Activated naive CD4-positive, alpha-beta T cell treated with anti-CD3 and anti-CD28 coated beads for 36 hours (primary cell): ENCODE measurements at regions of chr21 and their contacts with region 1.

Region 1: DNA sequence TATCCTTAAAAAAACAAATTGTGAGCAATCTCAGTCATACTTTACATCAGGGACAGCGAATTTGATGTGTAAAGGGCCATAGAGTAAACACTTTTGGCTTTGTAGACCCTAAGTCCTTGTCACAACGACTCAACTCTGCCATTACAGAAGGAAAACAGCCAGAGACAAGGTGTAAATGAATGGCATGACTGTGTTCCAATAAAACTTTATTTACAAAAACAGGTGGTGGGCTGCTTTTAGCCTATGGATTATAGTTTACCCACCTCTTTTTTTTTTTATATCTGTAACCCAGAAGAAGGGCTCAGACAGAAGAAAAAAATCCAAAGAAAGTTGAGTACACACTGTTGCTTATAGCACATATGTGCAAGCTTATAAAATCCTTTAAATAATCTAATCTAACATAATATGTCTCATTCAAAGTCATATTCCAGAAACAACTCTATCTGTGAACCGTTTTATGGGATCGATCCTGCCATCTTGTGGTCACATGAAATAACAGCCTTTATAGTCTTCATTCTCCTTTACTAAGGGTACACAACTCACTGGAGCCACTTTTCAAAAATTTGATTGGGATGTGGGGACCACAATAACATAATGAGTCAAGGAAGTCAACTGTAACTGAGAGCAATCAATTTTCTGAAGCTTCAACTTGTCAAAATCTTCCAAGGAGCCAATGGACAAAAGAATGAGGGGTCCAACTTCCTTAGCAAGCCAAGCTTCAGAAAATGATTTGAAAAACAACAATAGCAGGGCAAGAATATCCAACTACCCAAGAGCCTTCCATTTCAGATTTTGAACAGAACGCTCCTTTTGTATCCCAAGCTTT is 142.2 kb upstream of the KRTAP19-8 start:
- DNase-seq: peak; percentile 52
- H3K4me3 Mint-ChIP-seq: peak overlapping the region; percentile 87
- H3K27ac Mint-ChIP-seq: peak overlapping the region; percentile 98
- H3K4me1 Mint-ChIP-seq: peaks cover 75% of the 10 kb centered on the region
- H3K27me3 Mint-ChIP-seq: no peaks in the 10 kb centered on the region

Region 2: DNA sequence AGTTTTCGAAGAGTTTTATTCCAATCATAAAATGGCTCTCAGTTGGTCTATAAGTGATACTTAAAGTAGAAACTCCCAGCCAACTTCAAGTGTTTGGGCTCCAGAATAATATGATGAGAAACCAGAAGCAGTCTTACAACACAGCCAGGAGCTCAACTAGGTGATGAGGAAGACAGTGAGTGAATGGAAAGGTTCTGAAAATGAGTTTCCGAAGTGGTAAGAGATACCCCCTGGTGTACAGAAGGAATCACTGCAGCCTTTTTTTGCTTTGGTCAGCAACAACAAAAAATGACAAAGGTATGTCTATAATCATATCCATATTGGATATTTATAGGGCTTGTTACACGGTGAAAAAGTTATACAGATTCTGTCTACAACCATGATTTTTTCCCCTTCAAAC is 716.8 kb before region 1 on chr21:
- CTCF ChIA-PET with region 1: no interaction called
- intact Hi-C with region 1: no loop called
- DNase-seq: no peak
- H3K4me3 Mint-ChIP-seq: no peak overlapping the region
- H3K27ac Mint-ChIP-seq: no peak overlapping the region
- H3K4me1 Mint-ChIP-seq: no peaks in the 10 kb centered on the region
- H3K27me3 Mint-ChIP-seq: peaks cover 5% of the 10 kb centered on the region

Region 3: GRCh38 chr21:31107871-31108270 is 72.6 kb before region 1 on chr21:
- CTCF ChIA-PET with region 1: interaction called, 13 read pairs
- intact Hi-C with region 1: loop called (anchors 1 kb)
- DNase-seq: no peak
- H3K4me3 Mint-ChIP-seq: no peak overlapping the region
- H3K27ac Mint-ChIP-seq: no peak overlapping the region
- H3K4me1 Mint-ChIP-seq: peaks cover 28% of the 10 kb centered on the region
- H3K27me3 Mint-ChIP-seq: no peaks in the 10 kb centered on the region

Region 4: DNA sequence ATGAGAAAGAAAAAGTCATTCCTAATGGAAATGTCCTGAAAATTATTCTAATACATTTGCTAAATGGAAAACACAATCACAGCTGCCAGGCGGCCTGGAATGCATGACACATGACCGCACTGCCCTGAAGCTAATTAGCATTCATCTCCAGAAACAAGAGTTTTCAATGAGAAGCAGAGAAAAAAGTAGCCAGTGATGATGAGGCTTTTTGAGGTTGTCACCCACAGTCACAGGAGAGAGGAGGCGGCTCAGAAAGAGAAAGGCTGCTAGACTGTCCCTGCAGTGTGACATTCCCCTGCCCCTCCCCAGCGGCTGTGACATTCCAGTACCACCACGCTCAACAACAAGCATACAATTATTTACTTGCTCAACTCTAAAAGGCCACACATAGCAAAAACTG is 19.3 kb before region 1 on chr21:
- CTCF ChIA-PET with region 1: interaction called, 22 read pairs
- intact Hi-C with region 1: loop called (anchors 1 kb)
- DNase-seq: peak; percentile 60
- H3K4me3 Mint-ChIP-seq: no peak overlapping the region
- H3K27ac Mint-ChIP-seq: peak overlapping the region; percentile 89
- H3K4me1 Mint-ChIP-seq: peaks cover 88% of the 10 kb centered on the region
- H3K27me3 Mint-ChIP-seq: no peaks in the 10 kb centered on the region

Region 5: GRCh38 chr21:31326522-31327242 is 146.2 kb after region 1 on chr21:
- CTCF ChIA-PET with region 1: interaction called, 4 read pairs
- intact Hi-C with region 1: loop called (anchors 1 kb)
- DNase-seq: peak; percentile 83
- H3K4me3 Mint-ChIP-seq: peak overlapping the region; percentile 45
- H3K27ac Mint-ChIP-seq: peak overlapping the region; percentile 92
- H3K4me1 Mint-ChIP-seq: peaks cover 37% of the 10 kb centered on the region
- H3K27me3 Mint-ChIP-seq: no peaks in the 10 kb centered on the region

Region 6: DNA sequence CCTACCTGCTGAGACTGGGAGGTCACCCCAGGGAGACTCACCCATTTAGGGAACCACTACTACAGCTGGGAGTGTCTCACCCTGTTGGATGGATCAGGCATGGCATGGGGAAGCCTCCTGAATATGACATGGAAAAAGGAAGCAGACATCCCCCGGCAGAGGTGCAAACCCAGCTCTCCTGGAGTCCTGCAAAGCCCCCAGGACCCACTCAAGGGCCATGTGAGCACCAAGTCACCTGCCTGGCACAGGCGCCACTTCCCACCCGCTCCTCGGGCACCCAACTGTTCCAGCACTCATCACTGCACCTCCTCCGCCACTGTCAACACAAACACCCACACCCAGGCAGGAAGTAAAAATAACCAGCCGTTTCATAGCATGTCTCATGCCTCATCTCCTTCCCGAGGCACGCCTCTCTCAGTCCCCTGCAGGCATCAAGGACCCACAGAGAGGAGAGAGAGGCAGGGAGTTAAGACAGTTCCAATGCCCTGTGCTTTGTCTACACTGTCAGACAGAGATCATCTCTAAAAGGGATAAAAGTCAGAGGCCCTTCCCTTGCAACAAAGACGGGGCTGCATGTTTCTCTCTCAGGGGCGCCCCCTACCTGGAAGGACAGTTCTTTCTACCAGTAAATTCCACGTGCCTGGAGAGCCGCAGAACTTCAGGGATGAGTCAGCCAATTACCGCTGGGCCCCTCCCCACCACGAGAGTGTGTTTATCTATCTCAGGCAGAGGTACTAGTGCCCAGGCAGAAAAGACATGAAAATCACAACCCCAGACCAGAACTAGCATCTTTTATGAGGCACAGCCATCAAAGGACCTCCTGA is 328.9 kb after region 1 on chr21:
- CTCF ChIA-PET with region 1: no interaction called
- intact Hi-C with region 1: loop called (anchors 1 kb)
- DNase-seq: peak; percentile 96
- H3K4me3 Mint-ChIP-seq: peak overlapping the region; percentile 43
- H3K27ac Mint-ChIP-seq: peak overlapping the region; percentile 80
- H3K4me1 Mint-ChIP-seq: peaks cover 33% of the 10 kb centered on the region
- H3K27me3 Mint-ChIP-seq: no peaks in the 10 kb centered on the region

Region 7: GRCh38 chr21:31604591-31605190 is 424.2 kb after region 1 on chr21:
- CTCF ChIA-PET with region 1: interaction called, 4 read pairs
- intact Hi-C with region 1: loop called (anchors 1 kb)
- DNase-seq: peak; percentile 83
- H3K4me3 Mint-ChIP-seq: no peak overlapping the region
- H3K27ac Mint-ChIP-seq: no peak overlapping the region
- H3K4me1 Mint-ChIP-seq: peaks cover 7% of the 10 kb centered on the region
- H3K27me3 Mint-ChIP-seq: no peaks in the 10 kb centered on the region